ENCODE measurements at regions of chr6 and their contacts with region 1.

Region 1: GRCh38 chr6:20877008-20877937 is 343.0 kb downstream of the CDKAL1 start:
- DNase-seq: peak; percentile 89
- H3K4me3 Mint-ChIP-seq: peak overlapping the region; percentile 5
- H3K27ac Mint-ChIP-seq: peak overlapping the region; percentile 78
- H3K4me1 Mint-ChIP-seq: peaks cover 23% of the 10 kb centered on the region
- H3K27me3 Mint-ChIP-seq: no peaks in the 10 kb centered on the region
- CTCF ChIP-seq: no peak

Region 2: GRCh38 chr6:20997143-20997769 is 120.0 kb after region 1 on chr6:
- CTCF ChIA-PET with region 1: no interaction called
- POLR2A ChIA-PET with region 1: no interaction called
- intact Hi-C with region 1: no loop called
- DNase-seq: no peak
- H3K4me3 Mint-ChIP-seq: no peak overlapping the region
- H3K27ac Mint-ChIP-seq: no peak overlapping the region
- H3K4me1 Mint-ChIP-seq: peaks cover 13% of the 10 kb centered on the region
- H3K27me3 Mint-ChIP-seq: no peaks in the 10 kb centered on the region
- CTCF ChIP-seq: no peak

Region 3: GRCh38 chr6:21305893-21306332 is 428.6 kb after region 1 on chr6:
- CTCF ChIA-PET with region 1: no interaction called
- POLR2A ChIA-PET with region 1: no interaction called
- intact Hi-C with region 1: loop called (anchors 1 kb)
- DNase-seq: peak; percentile 75
- H3K4me3 Mint-ChIP-seq: no peak overlapping the region
- H3K27ac Mint-ChIP-seq: no peak overlapping the region
- H3K4me1 Mint-ChIP-seq: no peaks in the 10 kb centered on the region
- H3K27me3 Mint-ChIP-seq: no peaks in the 10 kb centered on the region
- CTCF ChIP-seq: no peak

Measured in MCF 10A (cell line).